Heart right ventricle (tissue), 16 donors: ENCODE measurements at regions of chr11 and their contacts with region 1.

Region 1: DNA sequence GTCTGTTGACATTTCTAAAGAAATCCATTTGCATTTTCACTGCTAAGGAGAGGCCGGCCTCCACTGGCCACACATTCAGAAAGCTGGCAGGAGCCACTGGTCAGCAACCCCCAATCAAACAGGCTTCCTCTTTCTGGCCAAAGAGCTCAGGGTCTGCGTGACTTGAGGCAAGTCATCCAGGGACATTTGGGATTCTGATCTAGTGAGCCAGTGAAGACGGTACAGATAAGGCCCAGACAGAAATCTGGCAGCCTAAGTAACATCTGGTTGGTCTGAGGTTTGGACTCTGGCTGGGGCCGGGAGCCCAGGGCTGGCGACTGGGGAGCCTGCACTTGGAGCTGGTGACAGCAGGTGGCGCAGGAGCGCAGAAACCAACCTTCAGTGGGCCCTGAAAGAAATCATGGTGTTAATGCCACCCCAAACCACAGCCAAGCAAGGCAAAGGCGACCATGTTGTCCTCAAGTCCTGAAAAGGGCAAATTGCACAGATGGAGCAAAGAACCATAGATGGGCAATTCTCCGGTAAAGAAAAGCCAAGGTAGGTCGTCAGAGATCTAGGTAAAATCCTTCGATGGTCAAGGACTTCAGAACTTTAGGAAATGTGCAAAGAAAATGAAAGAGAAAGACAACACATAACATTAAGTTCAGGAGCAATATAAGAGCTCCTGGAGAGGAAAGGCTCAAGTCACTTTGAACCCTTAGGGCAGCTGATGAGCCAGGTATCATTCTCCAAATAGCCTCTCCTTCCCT is 99.4 kb upstream of the BLID start:
- DNase-seq: peak; percentile 71 to 86
- ATAC-seq: peak; percentile 92 to 96 (median 94)
- H3K4me3 ChIP-seq: no peak overlapping the region
- H3K27ac ChIP-seq: peak overlapping the region in 9 of 10 donors; percentile 2 to 60 (median 11)
- H3K4me1 ChIP-seq: peaks cover 0 to 24% (median 14%) of the 10 kb centered on the region in 9 donors
- H3K27me3 ChIP-seq: no peaks in the 10 kb centered on the region
- CTCF ChIP-seq: peak; percentile 85 to 97 (median 94)

Region 2: DNA sequence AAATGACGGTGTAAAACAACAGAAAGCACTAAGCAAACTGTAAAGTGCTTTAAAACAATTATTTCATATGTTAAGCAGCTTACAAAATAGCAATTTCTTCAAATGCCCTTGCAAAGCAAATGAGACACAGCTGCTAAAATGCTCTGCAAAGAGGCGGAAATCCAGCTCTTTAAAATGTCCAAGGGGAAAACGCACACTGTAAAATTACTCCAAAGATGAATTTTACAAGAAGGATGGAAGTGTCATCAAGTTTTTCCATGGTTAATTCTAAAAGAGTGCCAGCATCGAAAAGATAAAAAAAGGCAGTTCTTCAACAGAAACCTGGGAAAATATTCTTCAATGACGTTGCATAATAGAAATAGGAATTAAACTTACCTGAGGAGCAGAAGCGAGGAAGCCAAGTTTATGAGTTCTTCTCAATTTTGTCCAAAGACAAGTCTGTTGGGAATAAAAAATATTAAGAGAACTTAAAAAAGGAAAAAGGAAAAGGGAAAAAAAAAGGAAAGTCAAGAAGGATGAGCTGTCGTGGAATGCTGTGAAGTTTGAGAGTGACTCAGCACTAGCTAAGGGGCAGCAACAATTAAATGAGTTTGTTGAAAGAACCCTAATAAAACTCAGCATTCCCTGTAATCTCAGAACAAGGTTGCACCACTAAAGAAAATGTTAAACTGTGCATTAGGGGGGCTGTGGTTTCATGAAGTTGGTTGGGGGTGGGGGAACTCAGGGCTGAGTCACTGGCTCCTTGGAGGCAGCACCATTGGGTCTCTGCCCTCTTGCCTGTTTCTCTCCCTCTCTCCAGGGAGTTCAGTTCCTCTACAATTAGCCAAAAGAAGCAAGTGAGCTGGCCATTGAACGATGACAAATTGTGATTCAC is 35.2 kb before region 1 on chr11:
- intact Hi-C with region 1: no loop called
- DNase-seq: no peak
- ATAC-seq: peak in 5 of 8 donors; percentile 43 to 85 (median 58)
- H3K4me3 ChIP-seq: peak overlapping the region in 1 of 10 donors; percentile 7
- H3K27ac ChIP-seq: peak overlapping the region in 4 of 10 donors; percentile 6 to 75 (median 51)
- H3K4me1 ChIP-seq: peaks cover 0 to 30% (median 4%) of the 10 kb centered on the region in 9 donors
- H3K27me3 ChIP-seq: no peaks in the 10 kb centered on the region
- CTCF ChIP-seq: no peak

Region 3: DNA sequence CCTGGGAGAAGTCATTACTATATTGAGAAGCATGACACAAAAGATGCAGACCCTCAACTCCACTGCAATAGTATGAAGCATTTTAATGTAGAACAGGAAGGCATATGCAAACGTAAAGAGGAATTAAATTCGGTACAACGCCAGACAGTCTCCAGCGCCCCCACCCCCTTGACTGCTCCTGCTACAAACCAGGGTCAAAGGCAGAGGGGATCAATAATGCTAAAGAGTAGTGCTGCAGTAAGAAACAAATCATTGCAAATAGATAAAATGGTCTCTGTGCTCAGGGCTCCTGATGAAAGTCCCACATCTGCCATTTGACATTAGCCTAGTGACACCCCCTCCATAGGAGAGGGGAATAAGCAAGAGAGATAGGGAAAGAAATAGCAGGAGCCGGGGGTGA is 65.5 kb after region 1 on chr11:
- intact Hi-C with region 1: loop called in 1 of 10 experiments (anchors 2 kb)
- DNase-seq: no peak
- ATAC-seq: no peak
- H3K4me3 ChIP-seq: no peak overlapping the region
- H3K27ac ChIP-seq: no peak overlapping the region
- H3K4me1 ChIP-seq: peaks cover 0 to 4% (median 0%) of the 10 kb centered on the region in 9 donors
- H3K27me3 ChIP-seq: no peaks in the 10 kb centered on the region
- CTCF ChIP-seq: no peak

Region 4: GRCh38 chr11:122293296-122294023 is 78.0 kb after region 1 on chr11:
- intact Hi-C with region 1: loop called in 1 of 10 experiments (anchors 1 kb)
- DNase-seq: no peak
- ATAC-seq: peak in 6 of 8 donors; percentile 33 to 74 (median 49)
- H3K4me3 ChIP-seq: no peak overlapping the region
- H3K27ac ChIP-seq: peak overlapping the region in 1 of 10 donors; percentile 30
- H3K4me1 ChIP-seq: peaks cover 0 to 4% (median 0%) of the 10 kb centered on the region in 9 donors
- H3K27me3 ChIP-seq: no peaks in the 10 kb centered on the region
- CTCF ChIP-seq: peak; percentile 18 to 57 (median 45)

Region 5: DNA sequence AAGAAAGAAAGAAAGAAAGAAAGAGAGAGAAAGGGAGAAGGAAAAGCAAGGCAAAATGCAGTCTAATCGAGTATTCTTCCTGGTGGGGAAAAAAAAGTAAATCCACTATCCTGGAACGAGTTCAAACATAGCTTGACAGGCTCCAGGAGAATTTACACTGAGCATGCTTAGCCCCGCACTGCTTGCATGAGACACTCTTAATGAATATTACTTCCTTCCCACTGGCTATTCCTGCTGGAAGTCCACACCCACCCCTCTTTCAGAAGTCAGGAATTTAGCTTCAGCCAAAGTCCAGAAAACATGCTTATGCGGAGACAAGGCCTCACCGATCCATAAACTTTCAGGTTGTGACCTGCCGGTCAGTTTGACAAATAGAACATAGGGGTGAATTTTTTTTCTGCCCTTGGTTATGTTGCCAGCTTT is 152.4 kb after region 1 on chr11:
- intact Hi-C with region 1: loop called in 3 of 10 experiments (anchors 10 kb)
- DNase-seq: peak in 1 of 2 donors; percentile 46
- ATAC-seq: peak; percentile 61 to 94 (median 90)
- H3K4me3 ChIP-seq: peak overlapping the region in 6 of 10 donors; percentile 2 to 39 (median 12)
- H3K27ac ChIP-seq: peak overlapping the region in 8 of 10 donors; percentile 11 to 80 (median 48)
- H3K4me1 ChIP-seq: peaks cover 0 to 34% (median 24%) of the 10 kb centered on the region in 9 donors
- H3K27me3 ChIP-seq: no peaks in the 10 kb centered on the region
- CTCF ChIP-seq: no peak

Region 6: GRCh38 chr11:122375687-122376398 is 160.4 kb after region 1 on chr11:
- intact Hi-C with region 1: loop called in 1 of 10 experiments (anchors 10 kb)
- DNase-seq: no peak
- ATAC-seq: no peak
- H3K4me3 ChIP-seq: no peak overlapping the region
- H3K27ac ChIP-seq: no peak overlapping the region
- H3K4me1 ChIP-seq: no peaks in the 10 kb centered on the region
- H3K27me3 ChIP-seq: no peaks in the 10 kb centered on the region
- CTCF ChIP-seq: no peak

Region 7: GRCh38 chr11:122439911-122440810 is 224.7 kb after region 1 on chr11:
- intact Hi-C with region 1: loop called in 2 of 10 experiments (anchors 5 kb)
- DNase-seq: peak; percentile 33 to 50
- ATAC-seq: peak; percentile 55 to 91 (median 76)
- H3K4me3 ChIP-seq: peak overlapping the region in 9 of 10 donors; percentile 38 to 68 (median 58)
- H3K27ac ChIP-seq: peak overlapping the region; percentile 63 to 85 (median 82)
- H3K4me1 ChIP-seq: peaks cover 0 to 25% (median 7%) of the 10 kb centered on the region in 9 donors
- H3K27me3 ChIP-seq: peaks cover 0 to 15% (median 0%) of the 10 kb centered on the region in 7 donors
- CTCF ChIP-seq: no peak

Region 8: GRCh38 chr11:122505304-122506006 is 290.0 kb after region 1 on chr11:
- intact Hi-C with region 1: loop called (anchors 1 to 5 kb)
- DNase-seq: peak; percentile 74 to 83
- ATAC-seq: peak; percentile 96 to 100 (median 97)
- H3K4me3 ChIP-seq: no peak overlapping the region
- H3K27ac ChIP-seq: no peak overlapping the region
- H3K4me1 ChIP-seq: peaks cover 0 to 8% (median 5%) of the 10 kb centered on the region in 9 donors
- H3K27me3 ChIP-seq: peaks cover 0 to 7% (median 0%) of the 10 kb centered on the region in 7 donors
- CTCF ChIP-seq: peak; percentile 64 to 95 (median 85)